RWPE1 (cell line): ENCODE measurements at regions of chr6 and their contacts with region 1.

Region 1: DNA sequence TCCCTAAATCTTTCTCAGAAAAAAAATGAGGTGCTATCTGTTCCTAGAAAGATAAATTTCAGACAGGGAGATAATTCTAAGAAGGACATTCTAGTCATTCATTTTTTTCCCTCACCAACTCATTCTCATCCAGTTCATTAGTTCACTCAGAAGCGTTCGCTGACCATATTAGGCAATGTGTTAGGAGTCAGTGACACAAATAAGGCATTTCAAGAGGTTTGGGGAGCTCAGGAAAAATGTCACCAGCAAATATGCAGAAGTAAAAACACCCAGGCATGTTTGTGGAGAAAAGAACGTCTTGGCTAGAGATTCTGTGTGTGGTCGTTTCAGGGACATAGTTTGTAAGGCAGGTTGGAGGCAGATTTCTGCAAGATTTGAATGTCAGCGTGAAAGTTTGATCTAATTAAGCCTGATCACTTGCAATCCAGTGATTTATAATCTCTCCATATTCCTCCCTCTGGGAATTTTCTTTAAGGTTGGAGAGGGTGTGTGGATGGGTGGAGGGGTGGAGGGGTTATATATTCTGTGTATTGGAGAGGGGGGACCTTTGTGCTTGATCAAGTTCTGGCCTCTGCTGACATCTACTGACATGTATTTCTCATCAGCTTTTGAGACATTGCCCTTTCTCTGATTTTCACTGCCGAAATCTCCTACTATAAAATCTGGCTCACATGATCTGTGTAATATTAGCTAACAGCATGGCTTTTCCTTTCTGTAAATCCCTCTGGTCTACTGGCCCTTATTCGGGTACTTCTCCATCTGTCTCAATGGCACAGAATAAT is 3.6 kb downstream of the MYCT1 start:
- DNase-seq: no peak
- H3K27ac ChIP-seq: no peak overlapping the region
- CTCF ChIP-seq: no peak

Region 2: DNA sequence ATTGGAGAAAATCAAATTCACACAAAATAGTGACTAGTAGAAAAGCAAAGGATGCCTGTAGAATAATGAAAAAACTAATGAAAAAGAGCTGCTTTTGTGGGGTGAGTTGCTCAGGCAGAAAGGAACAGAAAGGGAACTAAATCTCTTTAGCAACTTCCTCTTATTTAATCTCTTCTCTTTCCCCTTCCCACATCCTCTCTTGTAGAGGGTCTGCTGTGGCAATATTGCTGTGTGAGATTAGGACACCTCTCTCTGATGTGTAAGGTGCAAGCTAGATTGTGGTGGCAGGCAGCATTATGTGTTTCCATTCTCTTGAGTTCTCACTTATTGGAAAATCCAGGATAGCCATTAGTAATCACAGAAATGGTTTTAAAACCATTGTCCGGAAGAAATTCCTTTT is 113.8 kb before region 1 on chr6:
- CTCF ChIA-PET with region 1: no interaction called
- POLR2A ChIA-PET with region 1: interaction called, 13 read pairs
- DNase-seq: no peak
- H3K27ac ChIP-seq: no peak overlapping the region
- CTCF ChIP-seq: no peak

Region 3: GRCh38 chr6:152661776-152662175 is 39.5 kb before region 1 on chr6:
- CTCF ChIA-PET with region 1: no interaction called
- POLR2A ChIA-PET with region 1: no interaction called
- DNase-seq: no peak
- H3K27ac ChIP-seq: no peak overlapping the region
- CTCF ChIP-seq: no peak